ENCODE measurements at regions of chr3 and their contacts with region 1.

Region 1: GRCh38 chr3:112642912-112643506 is 2.1 kb upstream of the CCDC80 start:
- DNase-seq: peak; percentile 37 to 83 (median 78)
- H3K4me3 ChIP-seq: peak overlapping the region in 52 of 59 donors; percentile 3 to 57 (median 38)
- H3K27ac ChIP-seq: no peak overlapping the region
- H3K27me3 ChIP-seq: peaks cover 0 to 24% (median 0%) of the 10 kb centered on the region in 45 donors
- CTCF ChIP-seq: peak; percentile 30 to 88 (median 72)

Region 2: GRCh38 chr3:112979240-112979832 is 336.3 kb after region 1 on chr3:
- intact Hi-C with region 1: loop called (anchors 5 kb)
- DNase-seq: no peak
- H3K4me3 ChIP-seq: no peak overlapping the region
- H3K27ac ChIP-seq: no peak overlapping the region
- H3K27me3 ChIP-seq: no peaks in the 10 kb centered on the region
- CTCF ChIP-seq: peak; percentile 58 to 94 (median 77)

Measured in dorsolateral prefrontal cortex (tissue), 120 donors.